ENCODE measurements at regions of chr4 and their contacts with region 1.

Region 1: DNA sequence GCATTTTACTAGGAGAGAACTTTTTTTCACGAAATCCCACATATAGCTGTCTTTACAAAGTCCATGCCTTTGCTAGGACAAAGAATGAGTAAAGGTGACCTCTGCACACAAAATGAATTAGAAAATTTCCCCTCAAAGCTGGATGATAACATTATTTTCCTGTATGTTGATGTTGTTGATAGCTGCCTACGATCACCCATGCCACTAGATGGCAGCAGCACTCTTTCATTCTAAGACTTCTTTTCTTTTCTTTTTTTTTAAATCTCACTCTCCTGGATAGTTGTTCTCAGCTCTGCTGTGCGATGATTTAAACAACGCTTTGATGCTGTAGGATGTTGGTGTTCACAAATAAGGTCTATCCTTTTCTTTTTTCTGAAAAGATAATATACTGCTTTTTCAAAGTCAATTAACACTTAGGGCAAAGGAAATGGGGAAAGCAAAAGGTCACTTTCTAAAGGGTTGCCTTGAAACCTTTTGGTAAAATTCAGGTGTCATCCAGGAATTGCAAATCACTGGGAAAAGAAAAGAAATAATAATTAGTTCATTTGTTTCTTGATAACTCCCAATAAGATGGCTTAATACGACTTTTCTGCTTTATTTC is 266.8 kb downstream of the C4orf33 start:
- DNase-seq: peak; percentile 76
- H3K4me3 ChIP-seq: no peak overlapping the region
- H3K27ac ChIP-seq: no peak overlapping the region
- H3K4me1 ChIP-seq: no peaks in the 10 kb centered on the region
- H3K27me3 ChIP-seq: no peaks in the 10 kb centered on the region
- CTCF ChIP-seq: peak; percentile 88

Region 2: GRCh38 chr4:129133383-129133782 is 229.4 kb before region 1 on chr4:
- CTCF ChIA-PET with region 1: no interaction called
- POLR2A ChIA-PET with region 1: no interaction called
- intact Hi-C with region 1: no loop called
- DNase-seq: no peak
- H3K4me3 ChIP-seq: no peak overlapping the region
- H3K27ac ChIP-seq: no peak overlapping the region
- H3K4me1 ChIP-seq: no peaks in the 10 kb centered on the region
- H3K27me3 ChIP-seq: no peaks in the 10 kb centered on the region
- CTCF ChIP-seq: no peak

Region 3: GRCh38 chr4:129232589-129233324 is 130.0 kb before region 1 on chr4:
- CTCF ChIA-PET with region 1: no interaction called
- POLR2A ChIA-PET with region 1: no interaction called
- intact Hi-C with region 1: no loop called
- DNase-seq: no peak
- H3K4me3 ChIP-seq: no peak overlapping the region
- H3K27ac ChIP-seq: no peak overlapping the region
- H3K4me1 ChIP-seq: no peaks in the 10 kb centered on the region
- H3K27me3 ChIP-seq: no peaks in the 10 kb centered on the region
- CTCF ChIP-seq: no peak

Region 4: GRCh38 chr4:129526814-129527213 is 164.0 kb after region 1 on chr4:
- CTCF ChIA-PET with region 1: no interaction called
- POLR2A ChIA-PET with region 1: no interaction called
- intact Hi-C with region 1: loop called (anchors 5 kb)
- DNase-seq: peak; percentile 40
- H3K4me3 ChIP-seq: no peak overlapping the region
- H3K27ac ChIP-seq: no peak overlapping the region
- H3K4me1 ChIP-seq: no peaks in the 10 kb centered on the region
- H3K27me3 ChIP-seq: no peaks in the 10 kb centered on the region
- CTCF ChIP-seq: peak; percentile 55

Region 5: GRCh38 chr4:129583868-129584267 is 221.1 kb after region 1 on chr4:
- CTCF ChIA-PET with region 1: no interaction called
- POLR2A ChIA-PET with region 1: no interaction called
- intact Hi-C with region 1: no loop called
- DNase-seq: peak; percentile 31
- H3K4me3 ChIP-seq: no peak overlapping the region
- H3K27ac ChIP-seq: peak overlapping the region; percentile 55
- H3K4me1 ChIP-seq: peaks cover 6% of the 10 kb centered on the region
- H3K27me3 ChIP-seq: no peaks in the 10 kb centered on the region
- CTCF ChIP-seq: no peak

Region 6: GRCh38 chr4:130336585-130337217 is 973.9 kb after region 1 on chr4:
- CTCF ChIA-PET with region 1: no interaction called
- POLR2A ChIA-PET with region 1: no interaction called
- intact Hi-C with region 1: loop called (anchors 10 kb)
- DNase-seq: peak; percentile 70
- H3K4me3 ChIP-seq: no peak overlapping the region
- H3K27ac ChIP-seq: no peak overlapping the region
- H3K4me1 ChIP-seq: no peaks in the 10 kb centered on the region
- H3K27me3 ChIP-seq: no peaks in the 10 kb centered on the region
- CTCF ChIP-seq: peak; percentile 79

Measured in A673 (cell line).